Activated CD8-positive, alpha-beta memory T cell treated with anti-CD3 and anti-CD28 coated beads, Interleukin-2, amount 10 ng/mL, durations not matched to agents 7 days and 5 days (primary cell): ENCODE measurements at regions of chr10 and their contacts with region 1.

Region 1: DNA sequence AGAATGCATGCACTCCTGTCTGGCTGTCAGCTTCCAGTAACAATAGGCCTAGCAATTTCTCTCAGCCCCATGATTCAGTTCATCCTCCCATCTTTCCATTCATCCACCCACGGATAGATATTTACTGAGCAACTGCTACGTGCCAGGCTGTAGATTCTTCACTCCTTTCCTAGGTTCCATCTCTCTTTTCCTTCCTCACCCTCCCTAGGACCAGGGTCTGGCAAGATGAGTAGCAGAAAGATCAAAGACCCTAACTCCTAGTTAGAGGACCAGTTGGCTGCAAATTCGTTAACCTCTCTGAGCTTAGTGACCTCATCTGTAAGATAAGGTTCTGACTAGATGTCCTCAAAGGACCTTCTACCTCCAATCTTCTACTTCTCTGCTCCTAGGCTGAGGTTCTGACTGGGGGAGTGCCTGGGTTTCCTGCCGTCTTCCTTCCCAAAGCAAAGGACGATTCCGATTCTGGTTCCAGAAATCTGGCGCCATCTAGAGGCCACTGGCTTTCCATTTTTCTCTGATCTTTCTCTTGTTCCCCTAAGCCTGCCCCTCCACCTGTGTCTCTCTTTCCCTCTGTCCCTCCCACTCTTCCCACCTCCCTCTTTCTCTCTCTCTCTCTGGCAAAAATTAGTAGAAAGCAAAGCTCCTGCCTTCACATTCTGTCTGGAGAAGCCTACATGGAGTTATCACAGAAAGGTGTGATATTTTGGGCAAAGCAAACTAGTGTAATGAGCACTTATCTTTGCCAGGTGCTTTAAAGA is 26.2 kb downstream of the TBATA start:
- DNase-seq: peak; percentile 78
- ATAC-seq: peak; percentile 77
- H3K4me3 Mint-ChIP-seq: no peak overlapping the region
- H3K27ac Mint-ChIP-seq: peak overlapping the region; percentile 41
- H3K4me1 Mint-ChIP-seq: peaks cover 13% of the 10 kb centered on the region
- H3K27me3 Mint-ChIP-seq: peaks cover 9% of the 10 kb centered on the region

Region 2: DNA sequence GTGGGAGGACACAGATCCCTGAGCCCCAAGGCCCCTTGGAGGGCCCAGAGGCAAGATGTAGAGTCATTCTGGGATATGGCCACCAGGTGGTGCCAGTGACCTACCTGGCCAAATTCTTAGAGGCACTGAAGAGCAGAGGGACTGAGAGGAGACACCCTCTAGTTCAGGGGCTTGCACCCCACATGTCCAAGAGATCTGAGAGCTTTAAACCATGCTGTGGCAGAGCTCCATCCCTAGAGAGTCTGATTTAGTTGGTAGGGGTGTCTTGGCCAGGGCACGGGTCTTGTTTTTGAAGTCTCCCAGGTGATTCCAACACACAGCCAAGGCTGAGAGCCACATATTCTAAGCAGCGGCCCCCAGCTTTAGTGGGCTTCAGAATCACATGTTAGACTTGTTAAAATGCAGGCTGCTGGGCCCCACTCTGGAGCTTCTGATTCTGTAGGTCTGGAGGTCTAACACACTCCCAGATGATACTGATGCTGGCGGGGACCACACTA is 208.9 kb before region 1 on chr10:
- CTCF ChIA-PET with region 1: interaction called, 86 read pairs
- DNase-seq: peak; percentile 83
- ATAC-seq: peak; percentile 93
- H3K4me3 Mint-ChIP-seq: no peak overlapping the region
- H3K27ac Mint-ChIP-seq: no peak overlapping the region
- H3K4me1 Mint-ChIP-seq: peaks cover 6% of the 10 kb centered on the region
- H3K27me3 Mint-ChIP-seq: no peaks in the 10 kb centered on the region

Region 3: DNA sequence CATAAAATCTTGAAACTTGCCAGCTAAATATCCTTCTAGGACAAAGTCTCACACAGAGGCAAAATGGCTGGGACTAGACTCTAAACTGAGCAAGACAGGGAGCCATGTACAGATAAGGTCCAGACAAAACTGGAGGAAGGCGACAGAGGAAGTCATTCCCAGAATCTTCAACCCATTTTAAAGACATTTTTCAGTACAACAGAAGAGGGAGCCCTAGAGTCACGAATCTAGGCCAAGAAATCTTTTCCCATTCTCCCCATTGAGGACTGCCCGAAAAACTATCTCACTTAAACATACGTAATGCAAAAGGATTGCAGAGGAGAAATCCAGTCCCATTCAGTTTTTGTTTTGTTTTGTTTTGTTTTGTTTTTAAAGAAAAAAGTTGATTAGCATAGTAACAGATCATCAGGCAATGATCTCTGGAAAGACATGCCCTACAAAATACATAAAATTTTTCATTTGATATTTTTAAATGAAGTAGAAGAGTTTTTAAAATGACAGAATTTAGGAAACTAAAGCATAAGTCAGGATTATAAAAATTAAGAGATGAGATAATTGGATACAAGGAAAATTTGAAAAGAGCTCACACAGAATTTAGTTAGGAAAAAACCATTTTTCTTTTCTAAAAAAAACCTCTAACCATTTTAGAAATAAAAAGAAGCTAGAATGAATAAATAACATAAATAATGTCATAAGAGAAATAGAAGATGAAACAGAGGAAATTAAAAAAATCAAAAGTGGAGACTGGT is 139.5 kb before region 1 on chr10:
- CTCF ChIA-PET with region 1: interaction called, 16 read pairs
- DNase-seq: no peak
- ATAC-seq: no peak
- H3K4me3 Mint-ChIP-seq: no peak overlapping the region
- H3K27ac Mint-ChIP-seq: peak overlapping the region; percentile 69
- H3K4me1 Mint-ChIP-seq: peaks cover 46% of the 10 kb centered on the region
- H3K27me3 Mint-ChIP-seq: no peaks in the 10 kb centered on the region

Region 4: DNA sequence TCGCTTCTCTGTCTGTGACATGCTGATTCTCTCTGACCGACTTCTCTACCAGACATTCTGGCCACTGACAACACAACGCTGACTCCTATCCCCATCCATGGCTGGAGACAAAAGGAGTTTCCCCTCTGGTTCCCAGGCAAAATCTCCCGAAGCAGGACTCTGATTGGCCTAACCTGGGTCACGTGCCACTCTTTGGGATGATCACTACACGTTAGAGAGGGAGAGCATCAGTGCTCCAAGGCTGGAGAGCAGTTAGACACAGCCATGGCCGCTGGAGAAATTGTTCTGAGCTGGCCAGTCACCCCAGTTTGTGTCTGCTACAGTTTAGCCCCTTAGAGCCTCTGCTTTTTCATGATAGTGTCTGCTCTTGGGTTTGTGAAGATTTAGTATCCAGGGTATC is 47.8 kb before region 1 on chr10:
- CTCF ChIA-PET with region 1: no interaction called
- DNase-seq: no peak
- ATAC-seq: no peak
- H3K4me3 Mint-ChIP-seq: no peak overlapping the region
- H3K27ac Mint-ChIP-seq: no peak overlapping the region
- H3K4me1 Mint-ChIP-seq: peaks cover 7% of the 10 kb centered on the region
- H3K27me3 Mint-ChIP-seq: no peaks in the 10 kb centered on the region

Region 5: GRCh38 chr10:70742537-70743429 is 16.2 kb before region 1 on chr10:
- CTCF ChIA-PET with region 1: interaction called, 11 read pairs
- DNase-seq: peak; percentile 54
- ATAC-seq: peak; percentile 46
- H3K4me3 Mint-ChIP-seq: no peak overlapping the region
- H3K27ac Mint-ChIP-seq: peak overlapping the region; percentile 52
- H3K4me1 Mint-ChIP-seq: peaks cover 25% of the 10 kb centered on the region
- H3K27me3 Mint-ChIP-seq: no peaks in the 10 kb centered on the region